ENCODE measurements at regions of chr3 and their contacts with region 1.

Region 1: GRCh38 chr3:48635222-48636021 is at the start of gene SLC26A6:
- DNase-seq: peak; percentile 97
- H3K4me3 Mint-ChIP-seq: peak within 1 kb of the TSS; percentile 89
- H3K27ac Mint-ChIP-seq: no peak within 1 kb of the TSS
- H3K4me1 Mint-ChIP-seq: peaks cover 18% of the 10 kb centered on the region
- H3K27me3 Mint-ChIP-seq: no peaks in the 10 kb centered on the region
- total RNA-seq, gene SLC26A6: 47.7 to 52.4 TPM

Region 2: DNA sequence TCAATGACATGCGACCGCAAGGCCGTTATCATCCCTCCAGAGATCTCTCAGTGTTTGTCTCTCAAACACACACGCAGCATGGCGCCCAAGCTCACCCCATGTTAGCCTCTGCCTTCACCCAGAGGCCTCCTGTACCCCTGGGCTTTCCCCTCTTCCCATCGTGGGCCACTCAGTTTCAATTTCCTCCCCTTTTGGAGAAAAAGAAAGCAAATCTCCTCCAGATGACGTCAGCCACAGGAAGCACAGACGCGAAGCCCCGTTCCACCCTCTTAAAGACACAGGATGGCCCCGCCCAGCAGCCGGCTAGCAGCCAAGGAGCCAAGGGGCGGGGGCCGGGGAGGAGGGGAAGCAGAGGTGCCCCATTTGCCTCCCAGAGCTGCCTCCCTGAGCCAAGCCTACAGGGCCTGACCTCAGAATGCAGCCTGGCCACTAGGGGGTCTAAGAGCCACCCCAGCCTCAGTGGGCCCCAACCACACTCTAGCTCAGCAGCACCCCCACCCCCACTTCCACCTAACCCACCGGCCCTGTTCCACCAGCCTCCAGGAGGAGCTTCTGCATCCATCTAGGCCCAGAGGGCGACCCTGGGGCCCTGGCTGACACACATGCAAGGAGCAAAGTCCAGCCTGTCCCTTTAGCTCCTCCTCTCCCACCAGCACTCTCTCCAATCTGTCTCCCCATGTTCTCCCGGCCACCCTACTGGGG is 162.4 kb before region 1 on chr3:
- CTCF ChIA-PET with region 1: interaction called, 12 read pairs
- POLR2A ChIA-PET with region 1: interaction called, 3 read pairs
- intact Hi-C with region 1: loop called (anchors 2 kb)
- DNase-seq: peak; percentile 98
- H3K4me3 Mint-ChIP-seq: peak overlapping the region; percentile 79
- H3K27ac Mint-ChIP-seq: peak overlapping the region; percentile 98
- H3K4me1 Mint-ChIP-seq: peaks cover 50% of the 10 kb centered on the region
- H3K27me3 Mint-ChIP-seq: no peaks in the 10 kb centered on the region

Region 3: GRCh38 chr3:48623851-48624547 is 11.4 kb before region 1 on chr3:
- CTCF ChIA-PET with region 1: interaction called, 26 read pairs
- POLR2A ChIA-PET with region 1: interaction called, 3 read pairs
- intact Hi-C with region 1: no loop called
- DNase-seq: no peak
- H3K4me3 Mint-ChIP-seq: no peak overlapping the region
- H3K27ac Mint-ChIP-seq: no peak overlapping the region
- H3K4me1 Mint-ChIP-seq: peaks cover 7% of the 10 kb centered on the region
- H3K27me3 Mint-ChIP-seq: no peaks in the 10 kb centered on the region

Region 4: DNA sequence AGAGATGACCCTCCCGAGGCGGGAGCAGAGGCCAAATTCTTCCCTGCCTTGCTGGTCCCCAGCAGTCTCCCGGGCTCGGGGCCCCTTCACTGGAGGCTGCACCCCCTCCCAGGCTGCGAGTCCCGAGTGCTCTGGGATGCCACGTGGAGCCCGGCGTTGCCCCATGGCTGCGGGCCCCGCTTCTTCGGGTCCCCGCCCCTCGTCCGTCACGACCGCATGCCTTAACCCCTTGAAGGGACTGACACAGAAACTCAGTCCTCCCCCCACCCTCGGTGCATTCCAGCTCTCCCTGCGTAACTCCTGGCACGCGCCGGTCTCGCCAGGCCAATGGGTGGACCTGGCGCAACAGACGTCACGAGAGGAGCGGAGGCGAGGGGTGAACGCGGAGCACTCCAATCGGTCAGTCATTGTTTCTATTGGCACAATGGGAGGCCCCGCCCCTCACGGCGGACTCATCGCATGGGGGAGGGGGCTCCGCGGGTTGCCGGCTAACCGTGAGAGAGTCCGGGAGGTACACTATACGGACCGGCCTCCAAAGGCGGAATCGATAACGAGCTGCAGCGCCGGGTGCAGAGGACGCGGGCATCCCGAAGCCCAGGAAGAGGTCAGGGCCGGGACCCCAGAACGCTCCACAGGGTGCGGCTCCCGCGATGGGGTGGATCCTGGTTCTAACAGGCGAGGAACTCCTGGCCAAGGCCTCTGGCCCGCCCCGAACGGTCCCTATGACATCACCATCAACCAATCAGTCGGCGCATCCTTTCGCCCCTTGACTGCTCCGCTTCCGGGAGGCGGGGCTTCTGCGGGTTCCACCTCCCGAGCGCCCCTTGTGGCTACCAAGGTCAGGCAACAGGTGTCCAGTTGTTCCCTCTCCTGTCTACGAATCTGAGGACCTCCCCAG is 28.2 kb after region 1 on chr3:
- CTCF ChIA-PET with region 1: interaction called, 13 read pairs
- POLR2A ChIA-PET with region 1: interaction called, 11 read pairs
- intact Hi-C with region 1: loop called (anchors 1 kb)
- DNase-seq: peak; percentile 97
- H3K4me3 Mint-ChIP-seq: peak overlapping the region; percentile 88
- H3K27ac Mint-ChIP-seq: peak overlapping the region; percentile 74
- H3K4me1 Mint-ChIP-seq: peaks cover 15% of the 10 kb centered on the region
- H3K27me3 Mint-ChIP-seq: peaks cover 13% of the 10 kb centered on the region

Measured in activated CD4-positive, alpha-beta memory T cell treated with anti-CD3 and anti-CD28 coated beads for 36 hours (primary cell).